Gastrocnemius medialis (tissue), 4 donors: ENCODE measurements at regions of chr3 and their contacts with region 1.

Region 1: GRCh38 chr3:64039981-64040733 is 16.9 kb upstream of the PSMD6 start:
- DNase-seq: no peak
- ATAC-seq: no peak
- H3K4me3 ChIP-seq: no peak overlapping the region
- H3K27ac ChIP-seq: no peak overlapping the region
- H3K4me1 ChIP-seq: no peaks in the 10 kb centered on the region
- H3K27me3 ChIP-seq: no peaks in the 10 kb centered on the region
- CTCF ChIP-seq: no peak
- POLR2A ChIP-seq: no peak

Region 2: GRCh38 chr3:64399205-64399800 is 359.1 kb after region 1 on chr3:
- in situ Hi-C with region 1: loop called in 2 of 4 experiments (anchors 10 to 25 kb)
- intact Hi-C with region 1: loop called (anchors 2 kb)
- DNase-seq: no peak
- ATAC-seq: no peak
- H3K4me3 ChIP-seq: no peak overlapping the region
- H3K27ac ChIP-seq: no peak overlapping the region
- H3K4me1 ChIP-seq: no peaks in the 10 kb centered on the region
- H3K27me3 ChIP-seq: no peaks in the 10 kb centered on the region
- CTCF ChIP-seq: peak in 4 of 5 experiments; percentile 23 to 60 (median 54)
- POLR2A ChIP-seq: no peak

Region 3: GRCh38 chr3:64405211-64405835 is 365.2 kb after region 1 on chr3:
- in situ Hi-C with region 1: loop called in 1 of 4 experiments (anchors 5 kb)
- intact Hi-C with region 1: no loop called
- DNase-seq: no peak
- ATAC-seq: no peak
- H3K4me3 ChIP-seq: no peak overlapping the region
- H3K27ac ChIP-seq: no peak overlapping the region
- H3K4me1 ChIP-seq: no peaks in the 10 kb centered on the region
- H3K27me3 ChIP-seq: no peaks in the 10 kb centered on the region
- CTCF ChIP-seq: no peak
- POLR2A ChIP-seq: no peak